Left ventricle myocardium superior (tissue), 1 donor: ENCODE measurements at regions of chr1 and their contacts with region 1.

Region 1: DNA sequence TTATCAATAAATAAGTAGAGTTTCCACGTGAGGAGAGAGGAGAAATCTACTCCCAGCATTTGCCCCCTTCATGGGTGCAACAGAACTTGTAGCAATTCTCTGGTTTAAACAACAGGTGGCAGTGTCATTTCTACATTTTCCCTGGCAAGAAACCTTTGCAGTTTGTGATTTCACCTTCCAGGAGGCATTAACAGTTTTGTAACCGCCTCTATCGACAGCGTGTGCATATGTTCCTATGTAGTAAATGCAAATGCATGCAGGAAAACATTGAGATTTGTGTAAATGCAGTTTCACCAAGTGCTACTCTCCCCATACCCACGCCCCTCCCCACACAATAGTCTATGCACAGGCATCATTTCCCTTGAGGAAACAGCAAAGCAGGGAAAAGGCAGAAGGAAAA is 494.7 kb downstream of the SMYD3 start:
- DNase-seq: no peak
- ATAC-seq: peak; percentile 35

Region 2: GRCh38 chr1:245807306-245807705 is 205.0 kb before region 1 on chr1:
- intact Hi-C with region 1: no loop called
- DNase-seq: no peak
- ATAC-seq: no peak

Region 3: DNA sequence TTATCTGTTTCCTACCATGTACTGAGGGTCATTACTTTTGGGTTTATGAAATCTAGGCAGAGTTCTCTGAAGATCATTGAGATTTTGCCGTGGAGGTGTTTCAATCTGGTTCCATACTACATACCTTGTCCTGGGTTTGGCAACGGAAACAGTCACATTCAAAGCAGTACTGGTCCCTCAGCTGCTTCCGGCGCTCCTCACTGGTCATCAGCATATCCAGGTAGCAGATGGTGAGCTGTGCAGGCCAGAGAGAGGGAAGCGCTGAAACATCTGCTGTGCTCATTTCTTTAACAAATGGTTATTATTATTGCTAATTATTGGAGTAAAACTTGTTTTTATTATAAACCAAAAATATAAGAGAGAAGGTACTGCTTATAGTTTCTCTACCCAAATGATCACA is 96.9 kb before region 1 on chr1:
- intact Hi-C with region 1: no loop called
- DNase-seq: no peak
- ATAC-seq: no peak

Region 4: GRCh38 chr1:246128494-246129069 is 116.2 kb after region 1 on chr1:
- intact Hi-C with region 1: no loop called
- DNase-seq: no peak
- ATAC-seq: no peak

Region 5: DNA sequence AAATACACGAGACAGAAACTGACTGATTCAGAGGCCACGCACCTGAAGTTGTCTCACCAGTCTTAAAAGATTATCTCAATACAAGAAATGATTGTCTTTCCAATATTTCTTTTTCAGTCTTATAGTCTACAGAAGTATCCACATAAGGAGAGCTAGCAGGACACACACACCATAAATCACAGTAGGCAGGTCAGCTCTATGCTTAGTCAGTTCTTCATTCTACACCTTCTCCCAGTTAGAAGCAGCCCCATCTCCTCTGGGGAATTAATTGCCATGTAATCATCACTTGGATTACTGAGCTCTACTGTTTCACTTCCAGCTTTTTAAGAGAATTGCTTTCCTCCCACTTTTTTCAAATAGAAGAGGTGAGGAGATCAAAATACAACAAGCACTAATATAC is 435.2 kb after region 1 on chr1:
- intact Hi-C with region 1: loop called (anchors 5 kb)
- DNase-seq: no peak
- ATAC-seq: no peak